Activated naive CD4-positive, alpha-beta T cell treated with anti-CD3 and anti-CD28 coated beads for 36 hours (primary cell): ENCODE measurements at regions of chr11 and their contacts with region 1.

Region 1: GRCh38 chr11:14454861-14455632 is 44.6 kb downstream of the COPB1 start:
- DNase-seq: no peak
- H3K4me3 Mint-ChIP-seq: no peak overlapping the region
- H3K27ac Mint-ChIP-seq: no peak overlapping the region
- H3K4me1 Mint-ChIP-seq: no peaks in the 10 kb centered on the region
- H3K27me3 Mint-ChIP-seq: no peaks in the 10 kb centered on the region

Region 2: GRCh38 chr11:13772223-13773046 is 682.6 kb before region 1 on chr11:
- CTCF ChIA-PET with region 1: no interaction called
- intact Hi-C with region 1: loop called (anchors 10 kb)
- DNase-seq: peak; percentile 35
- H3K4me3 Mint-ChIP-seq: no peak overlapping the region
- H3K27ac Mint-ChIP-seq: no peak overlapping the region
- H3K4me1 Mint-ChIP-seq: no peaks in the 10 kb centered on the region
- H3K27me3 Mint-ChIP-seq: no peaks in the 10 kb centered on the region

Region 3: DNA sequence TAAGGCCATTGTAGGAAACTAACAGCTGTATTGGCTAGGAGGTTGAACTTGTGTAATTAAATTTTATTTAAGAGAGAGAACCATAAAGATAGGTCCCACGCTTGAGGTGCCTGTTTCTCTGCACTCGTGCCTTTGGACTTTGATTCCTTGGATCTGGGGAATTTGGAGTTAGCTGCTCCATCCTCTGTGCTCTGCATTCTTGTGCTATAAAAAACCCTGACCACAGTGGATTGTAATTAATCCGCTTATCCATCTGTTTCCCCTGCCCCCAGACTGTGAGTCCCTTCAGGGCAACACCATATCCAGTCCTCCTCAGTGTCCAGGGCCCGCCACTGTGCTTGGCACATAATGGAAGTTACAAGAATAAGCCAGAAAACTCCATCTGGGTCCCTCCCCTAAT is 322.7 kb before region 1 on chr11:
- CTCF ChIA-PET with region 1: no interaction called
- intact Hi-C with region 1: no loop called
- DNase-seq: no peak
- H3K4me3 Mint-ChIP-seq: no peak overlapping the region
- H3K27ac Mint-ChIP-seq: no peak overlapping the region
- H3K4me1 Mint-ChIP-seq: no peaks in the 10 kb centered on the region
- H3K27me3 Mint-ChIP-seq: no peaks in the 10 kb centered on the region

Region 4: DNA sequence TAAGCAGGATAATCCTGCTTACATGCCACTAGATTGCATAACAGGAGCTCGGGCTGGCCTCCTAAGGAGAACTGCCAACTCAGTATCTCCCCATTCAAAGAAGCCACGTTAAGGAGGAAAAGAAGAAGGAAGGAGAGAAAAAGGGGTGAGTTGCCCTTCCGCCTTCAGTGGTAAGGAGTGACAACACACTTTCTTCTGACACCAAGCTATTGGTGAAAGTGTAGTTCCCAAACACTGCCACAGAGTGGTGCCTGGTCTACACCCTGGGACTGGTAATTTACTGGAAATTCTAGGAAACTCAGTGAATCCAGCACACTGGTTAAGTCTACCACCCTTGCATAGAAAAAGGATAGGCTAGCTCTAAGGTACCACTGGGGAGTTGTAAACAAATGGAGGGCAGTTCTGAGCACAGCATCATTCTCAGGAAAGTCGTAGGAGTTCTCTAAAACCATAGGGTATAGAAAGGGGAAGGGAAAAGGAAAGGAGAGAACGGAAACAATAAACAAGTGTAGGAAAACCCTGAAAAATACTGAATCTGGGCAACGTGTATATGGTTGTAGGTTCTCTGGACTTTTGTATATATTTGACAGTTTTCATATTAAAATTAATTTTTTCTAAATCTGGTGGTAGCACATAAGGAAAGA is 154.3 kb before region 1 on chr11:
- CTCF ChIA-PET with region 1: interaction called, 138 read pairs
- intact Hi-C with region 1: loop called (anchors 1 kb)
- DNase-seq: peak; percentile 69
- H3K4me3 Mint-ChIP-seq: no peak overlapping the region
- H3K27ac Mint-ChIP-seq: no peak overlapping the region
- H3K4me1 Mint-ChIP-seq: peaks cover 2% of the 10 kb centered on the region
- H3K27me3 Mint-ChIP-seq: no peaks in the 10 kb centered on the region

Region 5: GRCh38 chr11:14373931-14374646 is 81.0 kb before region 1 on chr11:
- CTCF ChIA-PET with region 1: interaction called, 10 read pairs
- intact Hi-C with region 1: no loop called
- DNase-seq: no peak
- H3K4me3 Mint-ChIP-seq: no peak overlapping the region
- H3K27ac Mint-ChIP-seq: no peak overlapping the region
- H3K4me1 Mint-ChIP-seq: peaks cover 52% of the 10 kb centered on the region
- H3K27me3 Mint-ChIP-seq: peaks cover 7% of the 10 kb centered on the region

Region 6: DNA sequence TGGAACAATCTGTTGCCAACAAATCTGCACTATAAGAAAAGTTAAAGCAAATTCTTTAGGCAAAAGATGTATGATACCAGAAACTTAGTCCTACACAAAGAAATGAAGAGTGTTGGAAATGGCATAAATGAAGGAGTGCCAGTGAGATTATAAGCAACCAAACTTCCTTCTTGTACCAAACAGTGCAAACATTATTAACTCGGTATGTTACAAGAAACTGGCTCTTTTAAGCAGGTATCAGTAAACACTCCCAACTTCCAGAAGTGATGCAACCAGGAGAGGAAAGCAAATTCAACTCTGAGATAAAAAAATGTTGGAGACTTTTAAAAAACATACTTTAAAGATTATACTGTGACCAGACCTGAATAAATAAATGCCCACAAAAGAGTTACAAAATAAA is 16.1 kb after region 1 on chr11:
- CTCF ChIA-PET with region 1: interaction called, 20 read pairs
- intact Hi-C with region 1: no loop called
- DNase-seq: no peak
- H3K4me3 Mint-ChIP-seq: no peak overlapping the region
- H3K27ac Mint-ChIP-seq: no peak overlapping the region
- H3K4me1 Mint-ChIP-seq: peaks cover 46% of the 10 kb centered on the region
- H3K27me3 Mint-ChIP-seq: no peaks in the 10 kb centered on the region